Body of pancreas (tissue), 4 donors: ENCODE measurements at regions of chr7 and their contacts with region 1.

Region 1: GRCh38 chr7:16564909-16565426 is 38.3 kb downstream of the LRRC72 start:
- DNase-seq: peak in 3 of 4 donors; percentile 14 to 29 (median 20)
- ATAC-seq: peak; percentile 77
- H3K4me3 ChIP-seq: no peak overlapping the region
- H3K27ac ChIP-seq: no peak overlapping the region
- H3K4me1 ChIP-seq: no peaks in the 10 kb centered on the region
- H3K27me3 ChIP-seq: no peaks in the 10 kb centered on the region
- CTCF ChIP-seq: peak; percentile 60 to 80 (median 74)
- POLR2A ChIP-seq: no peak

Region 2: GRCh38 chr7:16078076-16078952 is 486.7 kb before region 1 on chr7:
- intact Hi-C with region 1: loop called (anchors 5 kb)
- DNase-seq: peak; percentile 17 to 46 (median 22)
- ATAC-seq: peak; percentile 67
- H3K4me3 ChIP-seq: no peak overlapping the region
- H3K27ac ChIP-seq: no peak overlapping the region
- H3K4me1 ChIP-seq: no peaks in the 10 kb centered on the region
- H3K27me3 ChIP-seq: no peaks in the 10 kb centered on the region
- CTCF ChIP-seq: peak; percentile 34 to 71 (median 61)
- POLR2A ChIP-seq: no peak

Region 3: GRCh38 chr7:16431646-16432424 is 133.1 kb before region 1 on chr7:
- intact Hi-C with region 1: loop called (anchors 10 kb)
- DNase-seq: peak; percentile 22 to 60 (median 46)
- ATAC-seq: peak; percentile 71
- H3K4me3 ChIP-seq: no peak overlapping the region
- H3K27ac ChIP-seq: no peak overlapping the region
- H3K4me1 ChIP-seq: no peaks in the 10 kb centered on the region
- H3K27me3 ChIP-seq: no peaks in the 10 kb centered on the region
- CTCF ChIP-seq: peak; percentile 15 to 79 (median 58)
- POLR2A ChIP-seq: no peak

Region 4: DNA sequence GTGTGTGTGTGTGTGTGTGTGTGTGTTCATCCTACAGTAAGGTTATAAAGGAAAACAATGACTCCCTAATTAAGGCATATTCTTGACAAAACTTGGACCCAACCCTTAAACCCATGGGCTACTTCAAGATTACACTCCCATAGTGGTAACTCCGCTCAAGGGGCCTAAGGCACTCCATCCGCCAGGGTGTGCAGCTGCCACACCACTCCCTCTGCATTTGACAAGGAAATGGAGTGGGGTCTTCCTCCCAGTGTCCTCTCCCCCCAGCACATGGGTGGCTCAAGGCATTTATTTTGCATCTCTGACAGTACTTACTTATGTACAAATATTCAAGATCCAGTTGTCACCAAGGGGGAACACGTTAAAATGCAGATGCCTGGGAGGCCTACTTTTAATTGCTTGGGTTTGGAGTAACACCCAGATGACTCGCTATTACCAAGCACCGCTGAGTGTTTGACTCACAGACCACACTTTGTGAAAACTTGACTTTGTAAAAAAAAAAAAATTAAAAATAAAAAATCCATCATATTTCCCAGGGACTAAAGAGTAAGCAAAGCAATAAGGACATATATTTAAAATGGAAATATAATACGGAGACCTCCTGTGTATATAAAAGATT is 369.9 kb after region 1 on chr7:
- intact Hi-C with region 1: no loop called
- DNase-seq: no peak
- ATAC-seq: no peak
- H3K4me3 ChIP-seq: no peak overlapping the region
- H3K27ac ChIP-seq: peak overlapping the region in 1 of 4 donors; percentile 17
- H3K4me1 ChIP-seq: peaks cover 10% of the 10 kb centered on the region
- H3K27me3 ChIP-seq: no peaks in the 10 kb centered on the region
- CTCF ChIP-seq: no peak
- POLR2A ChIP-seq: no peak